Psoas muscle (tissue), 8 donors: ENCODE measurements at regions of chr18 and their contacts with region 1.

Region 1: DNA sequence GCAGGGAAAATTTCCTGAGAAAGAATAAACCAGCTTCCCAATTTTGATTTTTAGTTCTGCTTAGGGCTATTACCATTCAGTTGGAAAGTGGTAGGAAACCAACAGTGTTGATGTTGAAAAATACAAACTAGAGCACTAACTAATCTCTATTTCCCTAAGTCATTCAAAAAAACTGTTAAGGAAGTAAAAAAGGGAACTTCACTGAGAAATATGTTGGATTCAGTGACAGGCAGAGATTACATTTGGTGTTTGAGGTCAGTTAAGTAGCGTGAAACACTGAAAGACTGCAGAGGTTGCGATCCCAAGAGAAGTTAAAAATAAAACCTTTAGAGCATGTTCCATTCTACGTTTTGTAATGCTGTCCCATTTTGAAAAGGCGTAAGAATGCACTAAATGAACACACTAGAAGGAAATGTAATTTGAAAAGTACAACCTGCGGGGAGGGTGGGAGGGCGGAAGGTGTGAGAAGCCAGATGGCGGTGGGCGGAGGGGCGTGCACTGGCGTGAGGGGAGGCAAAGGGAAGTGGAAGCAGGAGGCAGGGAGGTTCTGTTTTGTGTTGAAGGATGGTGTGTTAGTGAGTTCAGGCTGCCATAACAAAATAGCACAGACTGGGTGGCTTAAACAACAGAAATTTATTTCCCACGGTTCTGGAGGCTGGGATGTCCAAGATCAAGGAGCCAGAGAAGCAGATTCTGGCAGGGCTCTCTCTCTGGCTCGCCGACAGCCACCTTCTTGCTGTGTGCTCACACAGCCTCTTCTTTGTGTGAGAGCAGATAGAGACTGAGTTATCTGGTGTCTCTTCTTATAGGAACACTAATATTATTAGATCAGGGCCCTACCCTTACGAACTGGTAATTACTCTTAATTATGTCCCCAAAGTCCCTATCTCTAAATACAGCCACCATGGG is 94.3 kb upstream of the KCTD1 start:
- DNase-seq: no peak
- ATAC-seq: no peak
- H3K4me3 ChIP-seq: no peak overlapping the region
- H3K27ac ChIP-seq: no peak overlapping the region
- H3K4me1 ChIP-seq: no peaks in the 10 kb centered on the region
- H3K27me3 ChIP-seq: no peaks in the 10 kb centered on the region
- CTCF ChIP-seq: no peak

Region 2: GRCh38 chr18:26460449-26461091 is 182.1 kb before region 1 on chr18:
- intact Hi-C with region 1: loop called in 1 of 2 experiments (anchors 5 kb)
- DNase-seq: no peak
- ATAC-seq: no peak
- H3K4me3 ChIP-seq: no peak overlapping the region
- H3K27ac ChIP-seq: no peak overlapping the region
- H3K4me1 ChIP-seq: no peaks in the 10 kb centered on the region
- H3K27me3 ChIP-seq: no peaks in the 10 kb centered on the region
- CTCF ChIP-seq: no peak